GM10248 (cell line): ENCODE measurements at regions of chr16 and their contacts with region 1.

Region 1: GRCh38 chr16:84738255-84739038 is 38.6 kb downstream of the USP10 start:
- DNase-seq: peak; percentile 76
- CTCF ChIP-seq: peak; percentile 87

Region 2: DNA sequence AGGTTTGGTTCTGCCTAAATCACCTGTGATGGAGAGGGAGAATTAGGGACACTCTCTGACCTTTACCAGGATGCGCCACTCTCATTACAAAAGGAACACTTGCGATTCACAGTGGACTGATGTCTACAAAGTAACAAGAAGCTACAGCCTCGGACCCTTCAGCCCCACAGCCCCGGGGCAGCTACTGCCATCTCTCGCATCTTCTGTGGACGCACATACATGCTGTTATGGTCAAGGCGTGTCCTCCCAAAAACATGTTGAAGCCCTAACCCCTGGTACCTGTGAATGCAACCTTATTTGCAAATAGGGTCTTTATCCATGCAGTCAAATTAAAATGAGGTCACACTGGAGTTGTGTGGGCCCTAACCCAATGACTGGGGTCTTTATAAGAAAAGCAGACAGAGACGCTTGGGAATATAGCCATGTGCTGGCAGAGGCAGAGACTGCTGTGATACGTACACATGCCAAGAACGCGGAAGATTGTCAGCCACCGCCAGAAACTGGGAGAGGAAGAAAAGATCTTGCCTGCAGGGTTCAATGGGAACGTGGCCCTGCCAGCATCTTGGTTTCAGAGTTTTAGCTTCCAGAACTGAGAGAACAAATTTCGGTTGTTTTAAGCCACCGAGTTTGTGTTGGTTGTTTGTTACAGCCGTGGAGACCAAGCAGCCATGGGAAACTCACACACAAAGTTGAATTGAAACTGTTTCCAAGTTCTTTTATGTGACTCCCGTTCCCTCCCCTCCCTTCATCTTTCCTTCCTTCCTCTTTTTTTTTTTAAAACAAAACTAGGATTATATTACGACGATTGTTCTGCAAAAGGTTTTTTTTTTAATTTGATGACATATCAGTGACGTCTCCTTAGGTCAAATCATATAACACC is 347.1 kb before region 1 on chr16:
- CTCF ChIA-PET with region 1: no interaction called
- POLR2A ChIA-PET with region 1: no interaction called
- DNase-seq: no peak
- CTCF ChIP-seq: no peak

Region 3: DNA sequence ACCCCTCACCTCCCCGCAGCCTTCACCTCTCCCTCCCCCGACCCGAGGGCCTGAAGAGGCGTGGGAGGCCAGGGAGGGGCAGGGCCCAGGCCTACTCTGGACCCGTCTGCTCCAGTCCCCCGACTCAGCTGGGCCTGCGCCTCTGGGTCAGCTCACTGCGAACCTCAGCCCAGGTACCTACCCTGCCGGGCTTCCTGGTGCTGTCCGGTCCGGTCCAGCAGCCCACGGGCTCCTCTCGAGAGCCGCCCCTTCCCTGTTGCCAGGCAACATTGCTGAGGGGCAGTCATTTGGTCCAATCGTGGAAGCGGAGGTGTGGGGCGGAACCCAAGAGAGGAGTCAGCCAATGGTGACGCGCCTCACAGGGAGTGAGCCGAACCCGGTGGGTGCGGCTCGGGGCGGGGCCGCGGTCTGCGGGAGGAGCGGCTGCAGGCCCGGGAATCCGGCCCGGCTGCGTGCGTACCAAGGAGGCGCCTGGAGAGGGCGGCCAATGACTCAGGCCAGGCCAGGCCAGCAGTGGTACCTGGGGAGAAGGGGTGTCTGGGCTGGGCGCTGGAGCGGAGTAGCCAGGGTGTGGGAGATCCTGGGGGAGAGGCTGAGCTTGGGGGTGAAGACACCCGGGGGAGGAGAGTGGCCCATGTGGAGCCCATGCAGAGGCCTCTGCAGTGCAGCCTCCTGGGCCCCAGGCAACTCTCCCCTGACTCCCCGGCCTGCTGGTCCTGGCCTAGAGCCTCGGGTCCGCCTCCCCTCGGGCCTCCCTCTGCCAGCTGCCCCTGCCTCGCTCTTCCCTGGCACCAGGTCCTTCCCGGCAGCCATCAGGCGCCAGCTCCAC is 233.8 kb before region 1 on chr16 and contains the start of gene MEAK7:
- CTCF ChIA-PET with region 1: interaction called, 18 read pairs
- POLR2A ChIA-PET with region 1: no interaction called
- DNase-seq: peak; percentile 99
- CTCF ChIP-seq: no peak

Region 4: GRCh38 chr16:84599521-84600202 is 138.8 kb before region 1 on chr16:
- CTCF ChIA-PET with region 1: interaction called, 10 read pairs
- POLR2A ChIA-PET with region 1: no interaction called
- DNase-seq: peak; percentile 71
- CTCF ChIP-seq: no peak

Region 5: GRCh38 chr16:84663433-84664101 is 74.9 kb before region 1 on chr16:
- CTCF ChIA-PET with region 1: interaction called, 12 read pairs
- POLR2A ChIA-PET with region 1: no interaction called
- DNase-seq: peak; percentile 63
- CTCF ChIP-seq: peak; percentile 1

Region 6: DNA sequence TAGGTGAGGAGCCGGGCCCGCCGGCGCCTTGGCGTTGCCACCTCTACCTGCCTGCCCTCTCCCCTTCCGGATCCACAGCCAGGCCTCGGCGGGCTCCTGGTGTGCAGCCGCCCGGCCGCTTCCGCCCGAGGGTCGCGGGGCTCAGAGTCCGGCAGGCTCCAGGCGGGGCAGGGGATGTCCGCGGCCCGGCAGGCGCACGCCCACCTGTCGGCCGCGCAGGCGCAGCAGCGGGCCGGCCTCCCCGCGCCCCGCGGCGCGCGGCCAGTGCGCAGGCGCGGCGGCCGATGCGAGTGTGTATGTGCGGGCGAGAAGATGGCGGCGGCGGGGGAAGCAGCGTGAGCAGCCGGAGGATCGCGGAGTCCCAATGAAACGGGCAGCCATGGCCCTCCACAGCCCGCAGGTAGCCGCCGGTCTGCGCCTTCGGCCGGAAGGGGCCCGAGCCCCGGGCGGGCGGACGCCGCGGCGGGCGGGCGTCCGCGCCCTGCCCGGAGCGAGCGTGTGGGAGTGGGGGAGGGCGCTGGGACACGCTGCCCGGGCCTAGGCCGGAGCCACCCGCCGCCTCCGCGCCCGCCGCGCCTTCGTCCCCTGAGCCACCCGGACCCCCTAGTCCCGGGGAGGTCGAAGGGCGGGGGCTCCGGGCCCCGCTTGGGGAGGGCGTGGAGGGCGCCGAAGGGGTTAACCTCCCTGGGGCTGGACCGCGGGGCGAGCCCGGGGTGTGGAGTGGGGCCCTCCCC is 38.6 kb before region 1 on chr16 and contains the start of gene USP10:
- CTCF ChIA-PET with region 1: interaction called, 14 read pairs
- POLR2A ChIA-PET with region 1: no interaction called
- DNase-seq: peak; percentile 99
- CTCF ChIP-seq: no peak

Region 7: GRCh38 chr16:84726079-84726668 is 12.3 kb before region 1 on chr16:
- CTCF ChIA-PET with region 1: interaction called, 202 read pairs
- POLR2A ChIA-PET with region 1: no interaction called
- DNase-seq: peak; percentile 54
- CTCF ChIP-seq: peak; percentile 86

Region 8: DNA sequence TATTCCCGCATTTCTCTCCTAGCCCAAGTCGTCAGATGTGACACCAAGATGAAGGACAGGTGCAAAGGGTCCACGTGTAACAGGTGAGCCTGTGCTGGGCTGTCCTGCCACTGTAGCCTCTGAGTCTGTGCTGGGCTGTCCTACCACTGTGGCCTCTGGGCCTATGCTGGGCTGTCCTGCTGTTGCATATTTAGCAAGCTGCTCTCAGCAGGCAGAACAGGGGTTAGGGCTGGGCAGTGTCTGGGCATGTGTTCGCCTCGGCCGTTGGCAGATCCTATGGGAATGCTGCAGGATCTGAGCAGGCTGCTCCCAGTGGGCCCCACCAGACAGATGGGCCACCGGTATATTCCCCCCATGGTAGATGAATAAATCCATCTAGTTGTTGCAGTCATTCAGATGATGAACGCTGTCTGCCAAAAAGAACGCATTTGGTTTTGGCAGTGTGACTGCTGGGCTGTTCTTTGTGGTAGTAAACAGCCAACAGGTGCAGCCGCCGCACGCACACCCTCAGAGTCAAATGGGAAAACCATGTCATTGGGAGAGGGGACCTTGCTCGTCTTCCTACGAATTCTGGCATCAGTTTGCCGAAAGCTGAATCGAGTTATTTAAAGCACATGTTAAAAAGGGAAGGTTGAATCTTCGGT is 130.5 kb after region 1 on chr16:
- CTCF ChIA-PET with region 1: no interaction called
- POLR2A ChIA-PET with region 1: no interaction called
- DNase-seq: no peak
- CTCF ChIP-seq: no peak

Region 9: GRCh38 chr16:84952335-84953189 is 214.1 kb after region 1 on chr16:
- CTCF ChIA-PET with region 1: interaction called, 14 read pairs
- POLR2A ChIA-PET with region 1: no interaction called
- DNase-seq: peak; percentile 85
- CTCF ChIP-seq: peak; percentile 88